Breast epithelium (tissue), 4 donors: ENCODE measurements at regions of chr14 and their contacts with region 1.

Region 1: DNA sequence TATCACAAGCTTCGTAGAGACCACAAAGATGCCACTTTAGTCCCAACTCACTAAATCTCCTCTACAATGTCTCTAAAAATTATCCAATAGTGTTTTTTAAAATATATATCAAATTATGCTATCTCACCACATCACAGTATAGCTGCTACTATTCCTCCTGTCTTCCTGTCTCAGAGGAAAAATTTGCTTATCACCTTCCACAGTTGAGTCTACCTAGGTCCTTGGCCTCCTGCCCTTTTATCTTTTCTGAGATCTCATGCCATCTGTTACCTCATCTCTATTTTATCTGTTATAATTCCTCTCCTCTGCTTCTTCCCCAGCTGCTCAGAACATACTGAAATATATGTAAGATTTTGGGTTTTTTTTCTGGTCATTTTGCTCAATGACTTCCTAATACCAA is 568.2 kb downstream of the DIO2 start:
- DNase-seq: no peak
- H3K4me3 ChIP-seq: no peak overlapping the region
- H3K27ac ChIP-seq: no peak overlapping the region
- H3K4me1 ChIP-seq: no peaks in the 10 kb centered on the region
- H3K27me3 ChIP-seq: no peaks in the 10 kb centered on the region
- CTCF ChIP-seq: no peak
- POLR2A ChIP-seq: no peak

Region 2: DNA sequence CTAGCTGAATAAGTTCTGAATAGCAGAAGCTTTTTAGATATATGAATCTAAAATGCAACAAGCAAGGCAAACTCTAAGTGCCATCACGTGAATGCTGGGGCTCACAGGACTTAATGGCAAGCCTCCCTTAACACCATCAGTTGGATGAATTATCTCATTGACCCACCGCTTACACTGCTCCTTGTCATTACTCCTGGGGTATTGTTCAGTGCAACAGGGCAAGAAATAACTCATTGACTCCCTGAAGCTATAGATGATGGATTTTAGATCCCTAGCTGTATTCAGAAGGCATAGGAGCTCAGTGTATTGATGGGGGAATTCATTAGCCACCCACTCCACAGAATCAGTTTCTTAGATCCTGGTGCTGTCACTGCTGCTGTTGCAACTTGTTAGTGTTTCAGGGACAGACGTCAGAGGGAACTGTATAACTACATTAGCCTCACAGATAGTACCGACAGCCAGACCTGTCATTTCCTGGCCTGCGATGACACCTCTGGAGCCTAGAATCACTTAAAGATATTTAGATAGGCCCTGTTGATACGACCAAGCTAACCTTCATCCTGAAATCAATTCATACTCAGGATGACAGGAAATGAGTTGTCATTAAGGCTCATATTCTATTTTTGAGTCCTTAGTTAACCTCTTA is 167.1 kb before region 1 on chr14:
- intact Hi-C with region 1: loop called (anchors 5 kb)
- DNase-seq: no peak
- H3K4me3 ChIP-seq: no peak overlapping the region
- H3K27ac ChIP-seq: no peak overlapping the region
- H3K4me1 ChIP-seq: no peaks in the 10 kb centered on the region
- H3K27me3 ChIP-seq: no peaks in the 10 kb centered on the region
- CTCF ChIP-seq: no peak
- POLR2A ChIP-seq: no peak